A549 (cell line): ENCODE measurements at regions of chr10 and their contacts with region 1.

Region 1: GRCh38 chr10:17905491-17905890 is 46.2 kb upstream of the SLC39A12 start:
- DNase-seq: no peak
- ATAC-seq: no peak
- H3K4me3 ChIP-seq: no peak overlapping the region
- H3K27ac ChIP-seq: no peak overlapping the region
- H3K4me1 ChIP-seq: peaks cover 13% of the 10 kb centered on the region; the same call in 1 of the 3 replicates
- CTCF ChIP-seq: no peak
- EP300 ChIP-seq: no peak
- POLR2A ChIP-seq: no peak
- RAD21 ChIP-seq: no peak

Region 2: DNA sequence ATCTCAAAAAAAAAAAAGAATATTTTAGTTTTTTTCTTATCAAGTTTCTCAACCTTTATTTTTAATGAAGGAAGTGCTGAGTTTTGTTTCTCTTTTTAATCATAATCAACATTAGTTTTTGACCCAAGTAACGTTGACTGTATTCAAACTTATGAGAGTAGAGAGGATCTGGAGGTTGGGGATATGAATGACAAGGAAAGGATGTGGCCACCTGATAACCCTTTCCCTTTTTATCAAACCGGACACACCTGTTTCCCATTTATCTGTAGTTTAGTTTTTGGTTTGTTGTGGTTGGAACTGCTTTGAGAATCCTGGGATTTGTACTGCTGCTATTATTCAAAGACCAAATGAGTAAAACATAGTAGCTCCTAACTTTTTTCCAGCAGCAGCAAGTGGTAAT is 326.9 kb before region 1 on chr10:
- CTCF ChIA-PET with region 1: no interaction called
- POLR2A ChIA-PET with region 1: no interaction called
- DNase-seq: no peak
- ATAC-seq: no peak
- H3K4me3 ChIP-seq: no peak overlapping the region
- H3K27ac ChIP-seq: no peak overlapping the region
- H3K4me1 ChIP-seq: no peaks in the 10 kb centered on the region
- CTCF ChIP-seq: no peak
- EP300 ChIP-seq: no peak
- POLR2A ChIP-seq: no peak
- RAD21 ChIP-seq: no peak

Region 3: GRCh38 chr10:17918187-17918903 is 12.9 kb after region 1 on chr10:
- CTCF ChIA-PET with region 1: interaction called, 3 read pairs
- POLR2A ChIA-PET with region 1: interaction called, 12 read pairs
- DNase-seq: no peak
- ATAC-seq: no peak
- H3K4me3 ChIP-seq: no peak overlapping the region
- H3K27ac ChIP-seq: no peak overlapping the region
- H3K4me1 ChIP-seq: no peaks in the 10 kb centered on the region
- CTCF ChIP-seq: no peak
- EP300 ChIP-seq: no peak
- POLR2A ChIP-seq: no peak
- RAD21 ChIP-seq: no peak

Region 4: GRCh38 chr10:18767981-18768380 is 862.5 kb after region 1 on chr10:
- CTCF ChIA-PET with region 1: no interaction called
- POLR2A ChIA-PET with region 1: no interaction called
- DNase-seq: no peak
- ATAC-seq: no peak
- H3K4me3 ChIP-seq: no peak overlapping the region
- H3K27ac ChIP-seq: no peak overlapping the region
- H3K4me1 ChIP-seq: no peaks in the 10 kb centered on the region
- CTCF ChIP-seq: no peak
- EP300 ChIP-seq: no peak
- POLR2A ChIP-seq: no peak
- RAD21 ChIP-seq: no peak